T-cell (primary cell): ENCODE measurements at regions of chr12 and their contacts with region 1.

Region 1: GRCh38 chr12:71663561-71664294 is at the start of gene ZFC3H1:
- DNase-seq: peak; percentile 79 to 98 (median 91)
- ATAC-seq: peak; percentile 85 to 89 (median 88)
- H3K4me3 ChIP-seq: peak within 1 kb of the TSS; percentile 82 to 99
- H3K4me3 Mint-ChIP-seq: peak within 1 kb of the TSS; percentile 93 to 100 (median 98)
- H3K27ac ChIP-seq: peak within 1 kb of the TSS; percentile 98
- H3K27ac Mint-ChIP-seq: peak within 1 kb of the TSS; percentile 93 to 99
- H3K4me1 ChIP-seq: peaks cover 12 to 23% of the 10 kb centered on the region in 2 experiments
- H3K4me1 Mint-ChIP-seq: peaks cover 56 to 65% (median 60%) of the 10 kb centered on the region in 3 donors
- H3K27me3 ChIP-seq: no peaks in the 10 kb centered on the region
- H3K27me3 Mint-ChIP-seq: no peaks in the 10 kb centered on the region
- total RNA-seq, gene ZFC3H1: 85.5 to 146 (median 106) TPM

Region 2: GRCh38 chr12:71636704-71637115 is 27.0 kb before region 1 on chr12:
- CTCF ChIA-PET with region 1: interaction called, 4 to 14 read pairs
- POLR2A ChIA-PET with region 1: interaction called in 1 of 2 experiments, 5 read pairs
- DNase-seq: peak in 5 of 35 experiments; percentile 6 to 78 (median 24)
- ATAC-seq: peak in 3 of 4 experiments; percentile 57 to 65 (median 58)
- H3K4me3 ChIP-seq: no peak overlapping the region
- H3K4me3 Mint-ChIP-seq: peak overlapping the region in 1 of 3 donors; percentile 10
- H3K27ac ChIP-seq: no peak overlapping the region
- H3K27ac Mint-ChIP-seq: peak overlapping the region; percentile 47 to 66
- H3K4me1 ChIP-seq: no peaks in the 10 kb centered on the region
- H3K4me1 Mint-ChIP-seq: peaks cover 10 to 14% (median 12%) of the 10 kb centered on the region in 3 donors
- H3K27me3 ChIP-seq: no peaks in the 10 kb centered on the region
- H3K27me3 Mint-ChIP-seq: no peaks in the 10 kb centered on the region

Region 3: DNA sequence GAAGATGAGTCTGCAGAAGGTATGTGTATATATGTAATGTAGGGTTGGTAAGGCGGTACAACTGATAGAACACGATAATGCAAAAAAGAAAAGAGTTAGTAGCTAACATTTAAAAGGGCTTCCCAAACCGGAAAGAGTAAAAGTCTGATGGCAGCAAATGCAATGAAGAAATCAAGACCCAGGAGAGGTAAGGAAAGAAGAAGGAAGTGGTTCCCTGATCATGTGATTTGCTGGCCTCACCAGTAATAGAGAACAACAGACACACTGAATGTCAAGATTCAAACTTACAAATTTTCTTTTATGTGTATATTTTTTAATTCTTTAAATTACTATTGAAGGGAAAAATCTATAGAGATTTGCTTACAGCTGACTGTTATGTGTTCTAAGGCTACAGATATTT is 18.5 kb before region 1 on chr12:
- CTCF ChIA-PET with region 1: interaction called in 1 of 2 experiments, 3 read pairs
- POLR2A ChIA-PET with region 1: interaction called, 3 to 10 read pairs
- DNase-seq: no peak
- ATAC-seq: no peak
- H3K4me3 ChIP-seq: no peak overlapping the region
- H3K4me3 Mint-ChIP-seq: no peak overlapping the region
- H3K27ac ChIP-seq: no peak overlapping the region
- H3K27ac Mint-ChIP-seq: peak overlapping the region; percentile 74 to 78
- H3K4me1 ChIP-seq: no peaks in the 10 kb centered on the region
- H3K4me1 Mint-ChIP-seq: peaks cover 44 to 54% (median 47%) of the 10 kb centered on the region in 3 donors
- H3K27me3 ChIP-seq: no peaks in the 10 kb centered on the region
- H3K27me3 Mint-ChIP-seq: no peaks in the 10 kb centered on the region

Region 4: DNA sequence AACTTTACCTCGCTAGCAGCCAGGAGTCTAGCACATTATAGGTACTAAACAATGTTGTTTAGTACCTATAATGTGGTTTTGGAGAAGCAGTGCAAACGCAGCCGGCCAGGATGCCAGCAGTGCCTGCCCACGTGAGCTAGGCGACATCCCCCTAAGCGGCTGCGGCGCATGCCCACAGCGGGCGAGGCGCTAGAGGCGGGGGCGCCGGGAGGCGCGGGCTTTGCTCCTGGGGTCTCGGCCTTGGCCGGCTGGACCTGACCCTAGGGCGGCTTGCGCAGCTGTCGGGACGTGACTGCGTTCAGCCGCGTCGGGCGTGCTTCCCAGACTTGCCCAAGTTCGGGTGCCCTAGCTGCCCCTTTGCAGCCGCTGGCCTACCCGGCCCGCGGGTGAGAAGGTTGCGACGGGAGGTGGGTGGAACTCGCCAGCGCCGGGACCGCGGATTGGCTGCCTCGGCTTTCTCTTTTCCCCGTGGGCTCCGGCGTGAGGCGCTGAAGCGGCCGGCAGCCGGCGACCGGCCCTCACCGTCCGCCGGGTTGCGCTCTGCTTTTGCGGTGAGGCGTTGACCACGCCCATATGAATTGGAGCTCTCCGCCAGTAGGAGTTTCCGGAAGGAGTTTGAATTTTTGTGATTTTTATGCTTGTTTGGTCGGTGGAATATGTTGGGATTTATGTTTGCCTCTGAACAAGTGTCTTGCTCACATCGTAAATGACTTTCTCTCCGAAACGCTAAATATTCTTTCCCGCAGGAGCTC is 22.4 kb after region 1 on chr12 and contains the start of gene TMEM19:
- CTCF ChIA-PET with region 1: interaction called, 4 to 46 read pairs
- POLR2A ChIA-PET with region 1: interaction called, 29 to 57 read pairs
- DNase-seq: peak; percentile 71 to 88 (median 80)
- ATAC-seq: peak; percentile 92 to 93 (median 93)
- H3K4me3 ChIP-seq: peak within 1 kb of the TSS; percentile 57 to 79
- H3K4me3 Mint-ChIP-seq: peak within 1 kb of the TSS; percentile 85 to 96 (median 92)
- H3K27ac ChIP-seq: peak within 1 kb of the TSS; percentile 62
- H3K27ac Mint-ChIP-seq: peak within 1 kb of the TSS; percentile 87 to 90
- H3K4me1 ChIP-seq: peaks cover 5 to 16% of the 10 kb centered on the region in 2 experiments
- H3K4me1 Mint-ChIP-seq: peaks cover 24 to 48% (median 35%) of the 10 kb centered on the region in 3 donors
- H3K27me3 ChIP-seq: no peaks in the 10 kb centered on the region
- H3K27me3 Mint-ChIP-seq: no peaks in the 10 kb centered on the region
- total RNA-seq, gene TMEM19: 14.1 to 21.5 (median 17.7) TPM

Region 5: GRCh38 chr12:71754461-71755145 is 90.9 kb after region 1 on chr12 and contains the start of gene RAB21:
- CTCF ChIA-PET with region 1: interaction called, 3 read pairs
- POLR2A ChIA-PET with region 1: interaction called, 4 to 18 read pairs
- DNase-seq: peak; percentile 93 to 100 (median 99)
- ATAC-seq: peak; percentile 93 to 98 (median 96)
- H3K4me3 ChIP-seq: peak within 1 kb of the TSS; percentile 81 to 88
- H3K4me3 Mint-ChIP-seq: peak within 1 kb of the TSS; percentile 87 to 95 (median 93)
- H3K27ac ChIP-seq: peak within 1 kb of the TSS; percentile 90
- H3K27ac Mint-ChIP-seq: peak within 1 kb of the TSS; percentile 94
- H3K4me1 ChIP-seq: peaks cover 17 to 20% of the 10 kb centered on the region in 2 experiments
- H3K4me1 Mint-ChIP-seq: peaks cover 42 to 48% (median 47%) of the 10 kb centered on the region in 3 donors
- H3K27me3 ChIP-seq: no peaks in the 10 kb centered on the region
- H3K27me3 Mint-ChIP-seq: peaks cover 3 to 4% of the 10 kb centered on the region in 2 donors
- total RNA-seq, gene RAB21: 55.3 to 65.2 (median 63.6) TPM

Region 6: GRCh38 chr12:71840231-71840847 is 176.6 kb after region 1 on chr12:
- CTCF ChIA-PET with region 1: no interaction called
- POLR2A ChIA-PET with region 1: interaction called, 3 to 10 read pairs
- DNase-seq: peak in 21 of 35 experiments; percentile 4 to 43 (median 21)
- ATAC-seq: peak; percentile 24 to 37 (median 30)
- H3K4me3 ChIP-seq: peak overlapping the region; percentile 86 to 97
- H3K4me3 Mint-ChIP-seq: peak overlapping the region; percentile 92 to 98 (median 97)
- H3K27ac ChIP-seq: peak overlapping the region; percentile 97
- H3K27ac Mint-ChIP-seq: peak overlapping the region; percentile 96 to 99
- H3K4me1 ChIP-seq: peaks cover 15 to 26% of the 10 kb centered on the region in 2 experiments
- H3K4me1 Mint-ChIP-seq: peaks cover 46 to 57% (median 55%) of the 10 kb centered on the region in 3 donors
- H3K27me3 ChIP-seq: peaks cover 0 to 3% of the 10 kb centered on the region in 2 experiments
- H3K27me3 Mint-ChIP-seq: peaks cover 0 to under 1% of the 10 kb centered on the region in 2 donors